IMR-90 (cell line): ENCODE measurements at regions of chr14 and their contacts with region 1.

Region 1: DNA sequence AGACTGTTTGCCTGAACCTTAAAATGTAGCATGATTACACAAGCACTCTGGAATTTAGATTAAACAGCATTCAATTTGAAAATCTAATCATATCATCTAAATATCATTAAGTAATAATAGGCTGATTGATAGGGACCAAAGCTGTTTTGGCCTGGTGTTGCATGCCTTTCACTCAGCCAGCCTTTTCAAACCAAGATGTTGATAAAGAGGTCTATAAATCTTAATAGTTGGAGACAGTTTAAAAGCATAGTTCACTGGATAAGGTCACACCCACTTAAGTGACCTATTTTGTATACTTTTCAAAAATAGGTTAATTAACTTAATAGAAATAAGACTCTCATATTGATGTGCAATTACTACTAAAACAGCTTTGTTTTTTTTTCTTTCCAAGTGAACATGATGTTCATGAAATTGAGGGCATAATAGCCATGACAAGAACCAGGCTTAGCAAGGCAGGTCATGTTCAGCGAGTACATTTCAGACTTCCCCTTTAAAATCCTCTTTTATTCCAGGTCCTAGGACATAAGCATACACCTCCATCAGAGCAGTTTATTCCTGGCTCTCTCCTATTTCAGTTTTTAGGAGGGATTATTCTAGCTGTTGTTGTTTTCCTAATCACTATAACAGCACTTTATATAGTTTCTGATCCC is 349.0 kb downstream of the RAD51B start:
- DNase-seq: no peak
- ATAC-seq: no peak
- H3K4me3 ChIP-seq: no peak overlapping the region
- H3K27ac ChIP-seq: no peak overlapping the region
- H3K4me1 ChIP-seq: peaks cover 9% of the 10 kb centered on the region
- H3K27me3 ChIP-seq: no peaks in the 10 kb centered on the region
- CTCF ChIP-seq: no peak
- POLR2A ChIP-seq: no peak
- RAD21 ChIP-seq: no peak

Region 2: DNA sequence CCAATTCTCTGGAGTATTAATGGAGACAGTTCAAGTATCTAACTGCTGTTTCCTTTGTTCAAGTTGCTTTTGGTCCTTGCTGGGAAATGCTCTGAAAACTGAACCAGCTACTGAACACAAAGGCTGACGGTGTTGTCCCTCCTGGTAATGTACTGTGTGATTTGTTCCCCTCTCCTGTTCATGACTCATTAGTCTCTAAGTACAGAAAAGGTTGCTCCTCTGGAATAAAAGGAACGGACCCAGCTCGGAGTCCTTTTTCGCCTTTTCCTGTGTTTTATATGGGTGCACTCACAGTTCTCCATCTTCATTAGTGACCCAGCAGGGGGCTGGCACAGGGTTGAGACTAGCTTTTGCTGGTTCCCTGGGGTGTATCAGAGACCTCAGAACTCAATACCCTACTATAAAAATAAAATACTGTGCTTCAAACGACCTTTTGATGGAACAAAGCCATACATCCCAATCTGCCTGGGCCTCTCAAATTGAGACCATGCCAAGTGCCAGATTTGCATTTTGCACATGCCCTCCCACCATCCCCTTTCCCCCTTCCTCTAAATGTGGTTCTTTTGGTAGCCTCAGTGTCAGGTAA is 79.3 kb before region 1 on chr14:
- CTCF ChIA-PET with region 1: no interaction called
- POLR2A ChIA-PET with region 1: no interaction called
- dilution Hi-C with region 1: no loop called
- in situ Hi-C with region 1: no loop called
- intact Hi-C with region 1: no loop called
- DNase-seq: peak; percentile 61
- ATAC-seq: no peak
- H3K4me3 ChIP-seq: no peak overlapping the region
- H3K27ac ChIP-seq: no peak overlapping the region
- H3K4me1 ChIP-seq: peaks cover 7% of the 10 kb centered on the region
- H3K27me3 ChIP-seq: no peaks in the 10 kb centered on the region
- CTCF ChIP-seq: no peak
- POLR2A ChIP-seq: no peak
- RAD21 ChIP-seq: no peak

Region 3: DNA sequence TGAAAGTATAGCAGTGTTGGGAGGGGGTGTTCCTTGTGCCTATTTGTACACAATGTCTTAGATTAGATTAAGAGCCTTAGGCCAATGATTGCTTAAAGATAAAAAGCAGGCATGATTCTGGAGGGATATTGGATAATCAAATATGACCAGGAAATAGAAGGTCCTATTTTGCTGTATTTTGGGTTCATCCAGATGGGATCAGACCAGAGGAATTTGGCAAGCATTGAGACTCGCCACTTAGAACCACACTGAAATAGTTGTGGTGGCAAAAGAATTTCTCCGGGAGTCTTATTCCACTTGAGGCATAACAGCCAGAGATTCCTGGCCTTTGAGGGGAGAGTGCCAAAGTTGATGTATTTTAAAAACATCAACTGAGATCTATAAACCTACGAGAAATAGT is 21.8 kb before region 1 on chr14:
- CTCF ChIA-PET with region 1: no interaction called
- POLR2A ChIA-PET with region 1: no interaction called
- dilution Hi-C with region 1: no loop called
- in situ Hi-C with region 1: no loop called
- intact Hi-C with region 1: loop called (anchors 2 kb)
- DNase-seq: peak; percentile 96
- ATAC-seq: peak; percentile 94
- H3K4me3 ChIP-seq: no peak overlapping the region
- H3K27ac ChIP-seq: no peak overlapping the region
- H3K4me1 ChIP-seq: peaks cover 14% of the 10 kb centered on the region
- H3K27me3 ChIP-seq: no peaks in the 10 kb centered on the region
- CTCF ChIP-seq: no peak
- POLR2A ChIP-seq: no peak
- RAD21 ChIP-seq: no peak

Region 4: GRCh38 chr14:68157971-68158371 is 10.6 kb before region 1 on chr14:
- CTCF ChIA-PET with region 1: interaction called, 3 read pairs
- POLR2A ChIA-PET with region 1: interaction called, 13 read pairs
- dilution Hi-C with region 1: no loop called
- in situ Hi-C with region 1: no loop called
- intact Hi-C with region 1: no loop called
- DNase-seq: peak; percentile 41
- ATAC-seq: no peak
- H3K4me3 ChIP-seq: no peak overlapping the region
- H3K27ac ChIP-seq: no peak overlapping the region
- H3K4me1 ChIP-seq: peaks cover 3% of the 10 kb centered on the region; the same call in 1 of the 2 replicates
- H3K27me3 ChIP-seq: no peaks in the 10 kb centered on the region
- CTCF ChIP-seq: no peak
- POLR2A ChIP-seq: no peak
- RAD21 ChIP-seq: no peak

Region 5: DNA sequence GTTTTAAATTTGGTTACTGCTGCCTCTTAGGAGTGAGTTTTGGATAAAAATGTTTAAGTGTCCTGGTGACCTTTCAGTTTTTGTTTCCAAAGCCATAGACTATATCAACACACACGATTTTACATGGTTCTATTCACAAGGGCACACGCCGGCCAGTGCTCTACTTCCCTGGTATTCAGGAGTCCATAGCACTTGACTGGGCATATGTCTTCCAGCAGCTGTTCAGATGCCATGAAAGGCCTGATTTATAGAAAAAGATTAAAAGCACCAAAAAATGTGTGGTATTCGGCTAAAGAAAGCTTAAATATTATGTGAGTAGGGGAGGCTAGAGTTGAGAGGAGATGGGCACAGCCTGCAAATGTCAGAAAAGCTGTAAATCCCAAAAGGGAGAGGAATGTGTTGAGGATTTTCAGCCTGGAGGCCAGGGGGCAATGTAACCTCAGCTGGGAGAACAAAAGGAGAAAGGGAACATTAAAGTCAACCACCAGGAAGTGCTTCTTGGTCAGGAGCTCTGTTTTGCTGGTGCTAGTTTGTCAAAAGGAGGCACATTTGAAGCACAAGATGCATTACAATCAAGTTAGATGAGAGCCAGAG is 129.4 kb after region 1 on chr14:
- CTCF ChIA-PET with region 1: no interaction called
- POLR2A ChIA-PET with region 1: no interaction called
- dilution Hi-C with region 1: no loop called
- in situ Hi-C with region 1: no loop called
- intact Hi-C with region 1: no loop called
- DNase-seq: peak; percentile 38
- ATAC-seq: peak; percentile 35
- H3K4me3 ChIP-seq: no peak overlapping the region
- H3K27ac ChIP-seq: no peak overlapping the region
- H3K4me1 ChIP-seq: no peaks in the 10 kb centered on the region; the same call in 1 of the 2 replicates
- H3K27me3 ChIP-seq: no peaks in the 10 kb centered on the region
- CTCF ChIP-seq: peak; percentile 51
- POLR2A ChIP-seq: no peak
- RAD21 ChIP-seq: peak; percentile 61